ENCODE measurements at regions of chr4 and their contacts with region 1.

Region 1: GRCh38 chr4:184318852-184319251 is 101.2 kb upstream of the ENPP6 start:
- DNase-seq: no peak
- ATAC-seq: no peak
- H3K4me3 Mint-ChIP-seq: peak overlapping the region; percentile 24
- H3K27ac Mint-ChIP-seq: peak overlapping the region; percentile 98
- H3K4me1 Mint-ChIP-seq: peaks cover 73% of the 10 kb centered on the region
- H3K27me3 Mint-ChIP-seq: no peaks in the 10 kb centered on the region
- CTCF ChIP-seq: no peak

Region 2: DNA sequence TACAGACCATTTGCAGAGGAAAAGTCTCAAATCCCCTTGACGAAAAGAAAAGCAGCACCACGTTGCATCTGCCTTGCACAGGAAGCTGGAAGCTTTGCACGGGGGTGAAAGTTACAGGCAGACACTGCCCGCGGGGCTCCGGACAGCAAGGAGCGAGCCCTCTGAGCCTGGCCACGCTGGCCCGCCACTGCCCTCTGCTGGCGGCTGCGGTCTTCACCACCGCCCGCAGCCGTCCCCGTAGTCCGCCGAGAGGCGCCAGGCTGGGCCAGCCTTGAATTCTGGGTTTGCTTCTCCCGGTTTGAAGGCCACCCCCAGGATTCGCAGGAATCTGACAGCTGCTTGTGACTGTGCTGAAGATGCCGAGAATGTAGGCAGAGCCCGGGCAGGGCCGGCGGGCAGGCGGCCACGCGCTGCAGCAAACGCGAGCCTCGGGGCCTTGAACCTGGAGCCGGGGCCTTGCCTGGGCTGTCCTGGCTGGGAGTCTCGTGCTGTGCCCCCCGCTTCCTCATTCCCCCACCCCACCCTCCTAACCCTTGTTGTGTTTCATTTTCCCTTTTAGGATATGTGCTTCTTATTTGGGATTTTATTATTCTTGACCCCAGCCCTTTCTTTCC is 150.3 kb before region 1 on chr4:
- CTCF ChIA-PET with region 1: no interaction called
- POLR2A ChIA-PET with region 1: no interaction called
- intact Hi-C with region 1: no loop called
- DNase-seq: peak; percentile 50
- ATAC-seq: peak; percentile 72
- H3K4me3 Mint-ChIP-seq: no peak overlapping the region
- H3K27ac Mint-ChIP-seq: no peak overlapping the region
- H3K4me1 Mint-ChIP-seq: peaks cover 5% of the 10 kb centered on the region
- H3K27me3 Mint-ChIP-seq: peaks cover 52% of the 10 kb centered on the region
- CTCF ChIP-seq: peak; percentile 47

Region 3: GRCh38 chr4:184282251-184282713 is 36.6 kb before region 1 on chr4:
- CTCF ChIA-PET with region 1: interaction called, 8 read pairs
- POLR2A ChIA-PET with region 1: interaction called, 35 read pairs
- intact Hi-C with region 1: loop called (anchors 1 kb)
- DNase-seq: no peak
- ATAC-seq: peak; percentile 40
- H3K4me3 Mint-ChIP-seq: peak overlapping the region; percentile 32
- H3K27ac Mint-ChIP-seq: peak overlapping the region; percentile 83
- H3K4me1 Mint-ChIP-seq: peaks cover 66% of the 10 kb centered on the region
- H3K27me3 Mint-ChIP-seq: no peaks in the 10 kb centered on the region
- CTCF ChIP-seq: no peak

Measured in activated B cell treated with CpG ODN at 0.5 μM for 24 hours (primary cell).